GM12878 (cell line): ENCODE measurements at regions of chr18 and their contacts with region 1.

Region 1: DNA sequence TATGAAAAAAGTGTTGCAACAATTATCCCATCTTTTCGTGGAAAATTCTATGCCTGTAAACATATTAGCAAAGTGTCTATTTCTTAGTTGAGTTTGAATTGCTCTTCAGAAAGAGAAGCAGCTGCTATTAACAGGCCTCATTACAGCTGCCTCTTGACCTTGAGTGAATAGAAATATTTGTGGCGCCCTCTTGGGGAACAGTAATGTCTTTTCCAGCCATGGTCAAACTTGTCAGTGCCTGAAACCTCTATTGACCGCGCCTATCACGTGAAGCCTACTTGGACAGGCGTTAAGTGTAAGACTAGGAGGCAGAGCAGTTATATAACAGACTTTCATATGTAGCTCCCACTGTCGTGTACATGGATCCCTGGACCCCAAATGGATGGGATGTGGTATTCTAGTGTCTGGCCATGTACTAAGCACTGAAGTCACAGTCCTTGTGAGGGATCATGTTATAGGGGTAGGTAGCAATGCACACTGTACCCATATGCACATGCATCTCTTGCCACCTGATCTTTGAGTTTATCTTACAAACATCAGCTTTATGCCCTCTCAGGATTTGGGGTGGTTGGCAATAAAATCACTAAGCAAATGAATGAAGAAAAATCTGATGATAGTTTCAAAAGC is 245.0 kb downstream of the PTGR3 start:
- DNase-seq: no peak
- ATAC-seq: peak; percentile 97
- H3K4me3 ChIP-seq: no peak overlapping the region
- H3K27ac ChIP-seq: no peak overlapping the region
- H3K4me1 ChIP-seq: no peaks in the 10 kb centered on the region
- H3K27me3 ChIP-seq: no peaks in the 10 kb centered on the region
- CTCF ChIP-seq: peak; percentile 43 to 65 (median 46); a peak in 4 of 6 replicates
- EP300 ChIP-seq: no peak
- POLR2A ChIP-seq: no peak
- RAD21 ChIP-seq: peak; percentile 71

Region 2: DNA sequence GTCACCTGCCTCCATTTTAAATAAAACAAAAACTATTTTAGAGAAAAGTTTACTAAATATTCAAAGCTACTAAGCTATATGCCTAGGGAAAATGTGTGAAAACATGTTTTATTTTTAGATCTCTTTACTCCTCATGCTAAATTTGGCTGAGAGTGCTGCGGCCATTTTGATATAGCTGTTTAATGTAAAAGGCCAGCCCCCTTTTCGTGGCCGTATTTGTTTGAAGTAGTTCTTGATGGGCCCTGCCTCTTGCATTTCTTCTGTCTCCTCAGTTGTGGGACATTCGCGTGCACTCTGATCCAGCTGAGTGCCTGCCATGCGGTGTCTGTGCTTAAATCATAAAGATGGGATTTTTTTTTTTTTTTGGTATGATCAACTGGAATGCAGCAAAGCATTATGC is 302.2 kb before region 1 on chr18:
- CTCF ChIA-PET with region 1: interaction called, 11 read pairs
- POLR2A ChIA-PET with region 1: no interaction called
- RAD21 ChIA-PET with region 1: interaction called, 7 read pairs
- SMC1A ChIA-PET with region 1: interaction called, 8 read pairs
- in situ Hi-C with region 1: loop called (anchors 25 kb)
- intact Hi-C with region 1: no loop called
- DNase-seq: no peak
- ATAC-seq: no peak
- H3K4me3 ChIP-seq: no peak overlapping the region
- H3K27ac ChIP-seq: no peak overlapping the region
- H3K4me1 ChIP-seq: no peaks in the 10 kb centered on the region
- H3K27me3 ChIP-seq: no peaks in the 10 kb centered on the region
- CTCF ChIP-seq: no peak
- EP300 ChIP-seq: no peak
- POLR2A ChIP-seq: no peak
- RAD21 ChIP-seq: no peak

Region 3: DNA sequence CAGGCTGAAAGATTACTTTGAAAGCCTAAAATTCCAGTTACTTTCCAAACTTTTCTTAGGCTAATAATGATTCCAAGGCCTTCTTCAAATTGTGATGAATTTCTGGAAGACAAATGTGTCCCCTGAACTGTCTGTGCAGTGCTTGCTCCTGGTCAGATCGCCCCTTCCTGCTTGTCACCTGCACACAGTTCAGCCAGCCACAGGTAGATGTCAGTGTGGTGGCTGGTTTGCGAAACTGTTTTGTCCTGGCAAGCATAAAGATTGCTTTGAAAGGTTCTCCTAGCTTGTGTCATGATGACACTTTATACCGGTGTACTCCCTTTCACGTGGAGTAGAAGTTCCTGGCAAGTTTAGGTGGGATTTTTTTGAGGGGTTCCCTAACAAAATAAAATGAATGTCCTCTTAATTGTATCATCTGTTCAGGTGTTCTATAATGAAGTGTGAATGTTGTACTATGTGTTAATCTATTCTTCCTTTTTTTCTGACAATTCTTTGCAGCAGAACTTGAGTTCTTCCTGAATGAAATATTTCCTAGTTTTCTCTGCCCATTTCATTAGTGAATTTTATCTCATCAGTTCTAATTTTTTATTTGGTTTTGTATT is 67.4 kb before region 1 on chr18:
- CTCF ChIA-PET with region 1: interaction called, 19 read pairs
- POLR2A ChIA-PET with region 1: interaction called, 3 read pairs
- RAD21 ChIA-PET with region 1: interaction called, 6 read pairs
- SMC1A ChIA-PET with region 1: interaction called, 15 read pairs
- in situ Hi-C with region 1: no loop called
- intact Hi-C with region 1: loop called (anchors 5 kb)
- DNase-seq: no peak
- ATAC-seq: peak; percentile 92
- H3K4me3 ChIP-seq: no peak overlapping the region
- H3K27ac ChIP-seq: no peak overlapping the region
- H3K4me1 ChIP-seq: no peaks in the 10 kb centered on the region
- H3K27me3 ChIP-seq: no peaks in the 10 kb centered on the region
- CTCF ChIP-seq: peak; percentile 60 to 71 (median 63)
- EP300 ChIP-seq: no peak
- POLR2A ChIP-seq: no peak
- RAD21 ChIP-seq: peak; percentile 76

Region 4: GRCh38 chr18:74976331-74976909 is 12.5 kb after region 1 on chr18:
- CTCF ChIA-PET with region 1: interaction called, 10 read pairs
- POLR2A ChIA-PET with region 1: interaction called, 3 read pairs
- RAD21 ChIA-PET with region 1: interaction called, 3 read pairs
- SMC1A ChIA-PET with region 1: interaction called, 6 read pairs
- in situ Hi-C with region 1: no loop called
- intact Hi-C with region 1: no loop called
- DNase-seq: no peak
- ATAC-seq: no peak
- H3K4me3 ChIP-seq: no peak overlapping the region
- H3K27ac ChIP-seq: no peak overlapping the region
- H3K4me1 ChIP-seq: no peaks in the 10 kb centered on the region
- H3K27me3 ChIP-seq: no peaks in the 10 kb centered on the region
- CTCF ChIP-seq: no peak
- EP300 ChIP-seq: no peak
- POLR2A ChIP-seq: no peak
- RAD21 ChIP-seq: no peak